ENCODE measurements at regions of chr1 and their contacts with region 1.

Region 1: DNA sequence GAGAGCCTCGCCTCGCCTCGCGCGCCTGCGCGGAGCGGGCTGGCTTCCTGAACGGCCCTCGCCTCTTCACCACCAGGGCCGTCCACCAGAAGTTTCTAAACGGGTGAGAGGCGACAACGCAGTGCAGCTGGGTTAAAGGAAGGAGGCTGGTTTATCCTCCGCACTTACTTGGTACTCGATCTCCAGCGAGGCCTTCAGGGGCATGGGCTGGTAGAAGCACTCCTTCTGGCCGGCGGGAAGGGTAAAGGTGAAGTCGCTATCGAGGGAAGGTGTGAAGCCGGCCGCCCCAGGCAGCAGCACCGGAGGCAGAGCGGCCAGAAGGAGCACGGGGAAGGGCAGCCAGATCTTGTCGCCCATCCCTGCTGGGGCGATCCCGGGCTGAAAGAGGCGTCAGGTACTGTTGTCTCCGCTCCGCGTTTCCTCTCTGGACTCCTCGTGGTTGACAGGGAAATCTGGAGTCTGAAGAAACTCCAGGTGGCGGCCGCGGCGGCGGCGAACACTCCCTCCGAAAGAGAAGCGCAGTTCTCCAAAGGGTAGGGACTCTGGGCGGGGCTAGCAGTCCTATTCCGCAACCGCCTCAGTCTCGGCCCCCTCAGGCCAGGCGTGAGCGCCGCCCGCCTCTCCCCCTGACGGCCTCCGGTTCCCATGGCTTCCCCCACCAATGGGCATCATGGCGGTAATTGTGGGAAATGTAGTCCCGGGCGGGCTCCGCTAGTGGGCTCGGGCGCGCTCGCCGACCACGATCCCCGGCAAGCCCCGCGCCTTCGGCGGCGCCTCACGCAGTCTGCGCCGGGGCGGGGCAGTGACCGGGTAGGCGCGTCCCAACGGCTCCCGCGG is at the start of gene TMED5:
- DNase-seq: peak; percentile 94 to 97 (median 96)
- ATAC-seq: peak; percentile 89
- H3K4me3 ChIP-seq: peak within 1 kb of the TSS; percentile 95
- H3K4me3 Mint-ChIP-seq: peak within 1 kb of the TSS; percentile 91 to 98 (median 94)
- H3K27ac ChIP-seq: peak within 1 kb of the TSS; percentile 91
- H3K27ac Mint-ChIP-seq: peak within 1 kb of the TSS; percentile 86 to 99 (median 97)
- H3K4me1 ChIP-seq: peaks cover 24 to 30% of the 10 kb centered on the region in 2 donors
- H3K4me1 Mint-ChIP-seq: peaks cover 30 to 59% (median 47%) of the 10 kb centered on the region in 7 donors
- H3K27me3 ChIP-seq: no peaks in the 10 kb centered on the region
- H3K27me3 Mint-ChIP-seq: no peaks in the 10 kb centered on the region
- total RNA-seq, gene TMED5: 37.8 to 60.0 (median 47.4) TPM

Region 2: GRCh38 chr1:92831762-92832536 is 348.2 kb before region 1 on chr1 and contains the start of gene RPL5:
- CTCF ChIA-PET with region 1: no interaction called
- POLR2A ChIA-PET with region 1: no interaction called
- intact Hi-C with region 1: loop called (anchors 1 kb)
- DNase-seq: peak; percentile 94 to 99 (median 98)
- ATAC-seq: peak; percentile 95
- H3K4me3 ChIP-seq: peak within 1 kb of the TSS; percentile 94
- H3K4me3 Mint-ChIP-seq: peak within 1 kb of the TSS; percentile 94 to 100 (median 98)
- H3K27ac ChIP-seq: peak within 1 kb of the TSS; percentile 94
- H3K27ac Mint-ChIP-seq: peak within 1 kb of the TSS; percentile 98 to 100 (median 99)
- H3K4me1 ChIP-seq: peaks cover 16 to 30% of the 10 kb centered on the region in 2 donors
- H3K4me1 Mint-ChIP-seq: peaks cover 29 to 54% (median 44%) of the 10 kb centered on the region in 7 donors
- H3K27me3 ChIP-seq: no peaks in the 10 kb centered on the region
- H3K27me3 Mint-ChIP-seq: peaks cover 0 to 5% (median 0%) of the 10 kb centered on the region in 5 donors
- total RNA-seq, gene RPL5: 764 to 1,693 (median 1,596) TPM

Region 3: GRCh38 chr1:93033785-93034184 is 146.3 kb before region 1 on chr1:
- CTCF ChIA-PET with region 1: no interaction called
- POLR2A ChIA-PET with region 1: no interaction called
- intact Hi-C with region 1: loop called in 1 of 2 experiments (anchors 2 kb)
- DNase-seq: no peak
- ATAC-seq: no peak
- H3K4me3 ChIP-seq: no peak overlapping the region
- H3K4me3 Mint-ChIP-seq: no peak overlapping the region
- H3K27ac ChIP-seq: no peak overlapping the region
- H3K27ac Mint-ChIP-seq: no peak overlapping the region
- H3K4me1 ChIP-seq: peaks cover 0 to 10% of the 10 kb centered on the region in 2 donors
- H3K4me1 Mint-ChIP-seq: peaks cover 10 to 34% (median 18%) of the 10 kb centered on the region in 7 donors
- H3K27me3 ChIP-seq: no peaks in the 10 kb centered on the region
- H3K27me3 Mint-ChIP-seq: peaks cover 0 to 3% (median 0%) of the 10 kb centered on the region in 5 donors

Region 4: GRCh38 chr1:93129507-93130099 is 50.5 kb before region 1 on chr1:
- CTCF ChIA-PET with region 1: no interaction called
- POLR2A ChIA-PET with region 1: no interaction called
- intact Hi-C with region 1: no loop called
- DNase-seq: no peak
- ATAC-seq: no peak
- H3K4me3 ChIP-seq: no peak overlapping the region
- H3K4me3 Mint-ChIP-seq: no peak overlapping the region
- H3K27ac ChIP-seq: no peak overlapping the region
- H3K27ac Mint-ChIP-seq: no peak overlapping the region
- H3K4me1 ChIP-seq: no peaks in the 10 kb centered on the region
- H3K4me1 Mint-ChIP-seq: peaks cover 0 to 2% (median 0%) of the 10 kb centered on the region in 7 donors
- H3K27me3 ChIP-seq: no peaks in the 10 kb centered on the region
- H3K27me3 Mint-ChIP-seq: no peaks in the 10 kb centered on the region

Region 5: DNA sequence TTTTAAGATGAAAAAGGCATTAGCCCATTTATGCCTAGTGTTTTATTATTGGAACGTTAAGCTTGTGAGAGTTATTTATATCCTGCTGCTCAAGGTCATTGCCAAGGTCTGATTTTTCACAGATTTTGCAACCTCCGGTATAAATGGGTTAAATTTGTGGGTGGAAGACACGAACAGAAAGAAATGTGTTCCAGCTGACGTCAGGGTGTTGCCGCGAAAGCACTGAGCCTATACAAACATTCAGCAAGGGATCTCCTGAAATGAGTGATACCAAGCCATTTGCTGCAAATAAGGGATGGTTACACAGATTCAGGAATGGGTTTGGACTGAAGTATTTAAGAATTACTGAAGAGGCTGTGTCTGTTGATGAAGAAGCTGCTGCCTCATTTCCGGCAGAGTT is 32.1 kb before region 1 on chr1:
- CTCF ChIA-PET with region 1: no interaction called
- POLR2A ChIA-PET with region 1: no interaction called
- intact Hi-C with region 1: loop called (anchors 5 kb)
- DNase-seq: no peak
- ATAC-seq: no peak
- H3K4me3 ChIP-seq: no peak overlapping the region
- H3K4me3 Mint-ChIP-seq: no peak overlapping the region
- H3K27ac ChIP-seq: no peak overlapping the region
- H3K27ac Mint-ChIP-seq: peak overlapping the region in 2 of 9 donors; percentile 18 to 43
- H3K4me1 ChIP-seq: no peaks in the 10 kb centered on the region
- H3K4me1 Mint-ChIP-seq: peaks cover 0 to 11% (median 0%) of the 10 kb centered on the region in 7 donors
- H3K27me3 ChIP-seq: no peaks in the 10 kb centered on the region
- H3K27me3 Mint-ChIP-seq: no peaks in the 10 kb centered on the region

Region 6: DNA sequence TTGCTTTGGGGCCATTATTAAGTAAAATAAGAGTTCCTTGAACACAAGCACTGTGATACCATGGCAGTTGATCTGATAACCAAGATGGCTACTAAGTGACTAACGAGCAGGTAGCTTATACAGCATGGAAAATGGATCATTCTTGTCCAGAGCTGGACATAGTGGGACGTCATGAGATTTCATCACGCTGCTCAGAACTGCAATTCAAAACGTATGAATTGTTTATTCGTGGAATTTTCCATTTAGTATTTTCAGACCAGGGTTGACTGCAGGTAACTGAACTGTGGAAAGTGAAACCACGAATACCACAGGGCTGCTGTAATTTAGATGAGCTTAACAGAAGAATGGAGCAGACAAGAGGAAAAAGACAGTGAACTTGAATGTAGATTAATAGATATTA is 39.3 kb after region 1 on chr1:
- CTCF ChIA-PET with region 1: no interaction called
- POLR2A ChIA-PET with region 1: no interaction called
- intact Hi-C with region 1: loop called (anchors 1 to 2 kb)
- DNase-seq: peak in 7 of 9 donors; percentile 3 to 28 (median 19)
- ATAC-seq: peak; percentile 34
- H3K4me3 ChIP-seq: peak overlapping the region; percentile 64
- H3K4me3 Mint-ChIP-seq: peak overlapping the region; percentile 35 to 86 (median 79)
- H3K27ac ChIP-seq: peak overlapping the region; percentile 55
- H3K27ac Mint-ChIP-seq: peak overlapping the region; percentile 37 to 90 (median 69)
- H3K4me1 ChIP-seq: peaks cover 4 to 6% of the 10 kb centered on the region in 2 donors
- H3K4me1 Mint-ChIP-seq: peaks cover 6 to 23% (median 19%) of the 10 kb centered on the region in 7 donors
- H3K27me3 ChIP-seq: no peaks in the 10 kb centered on the region
- H3K27me3 Mint-ChIP-seq: no peaks in the 10 kb centered on the region

Region 7: DNA sequence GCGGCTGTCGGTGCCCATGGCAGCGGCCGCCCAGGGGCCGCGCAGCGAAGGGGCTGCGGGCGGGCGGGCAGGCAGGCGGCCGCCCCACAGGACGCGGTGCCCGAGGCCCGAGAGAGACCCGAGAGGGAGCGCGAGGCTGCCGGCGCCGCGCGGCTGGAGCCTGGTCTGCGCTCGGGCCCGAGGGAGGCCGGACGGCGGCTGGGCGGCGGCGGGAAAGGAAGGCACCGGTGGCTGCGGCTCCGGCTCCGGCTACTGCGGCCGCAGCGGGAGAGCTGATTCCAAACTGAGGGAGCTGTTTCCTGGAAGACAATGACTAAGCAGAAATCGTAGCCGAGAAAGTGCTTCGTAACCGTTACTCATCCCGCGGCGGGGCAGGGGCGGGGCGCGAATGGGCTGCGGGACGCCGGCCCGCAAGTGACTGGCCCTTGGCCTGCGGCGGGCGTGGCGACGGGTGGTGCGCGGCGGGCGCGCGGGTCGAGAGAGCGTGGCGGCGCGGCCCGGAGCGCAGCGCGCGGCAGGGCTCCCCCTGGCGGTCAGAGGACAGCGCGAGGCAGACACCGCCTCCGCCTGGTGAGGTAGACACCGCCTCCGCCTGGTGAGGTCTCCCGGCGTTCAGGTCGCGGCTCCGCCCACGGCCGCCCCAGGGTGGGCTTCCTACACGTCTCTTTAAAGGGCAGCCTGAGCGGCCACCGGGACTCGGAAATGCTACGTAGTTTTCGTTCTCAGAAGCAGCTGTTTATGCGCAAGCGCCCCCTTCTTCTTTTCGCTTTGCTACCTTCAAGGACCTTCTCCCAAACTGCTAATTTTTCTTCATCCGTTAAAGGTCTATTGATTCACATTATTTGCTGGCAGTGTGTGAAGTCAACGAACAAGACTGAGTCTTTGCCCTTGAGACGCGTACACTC is 729.3 kb after region 1 on chr1 and contains the start of gene GCLM:
- CTCF ChIA-PET with region 1: no interaction called
- POLR2A ChIA-PET with region 1: no interaction called
- intact Hi-C with region 1: loop called (anchors 1 to 10 kb)
- DNase-seq: peak; percentile 81 to 97 (median 88)
- ATAC-seq: peak; percentile 98
- H3K4me3 ChIP-seq: peak within 1 kb of the TSS; percentile 61
- H3K4me3 Mint-ChIP-seq: peak within 1 kb of the TSS; percentile 86 to 99 (median 90)
- H3K27ac ChIP-seq: peak within 1 kb of the TSS; percentile 73
- H3K27ac Mint-ChIP-seq: peak within 1 kb of the TSS; percentile 60 to 94 (median 90)
- H3K4me1 ChIP-seq: peaks cover 9 to 13% of the 10 kb centered on the region in 2 donors
- H3K4me1 Mint-ChIP-seq: peaks cover 19 to 38% (median 33%) of the 10 kb centered on the region in 7 donors
- H3K27me3 ChIP-seq: no peaks in the 10 kb centered on the region
- H3K27me3 Mint-ChIP-seq: peaks cover 0 to 30% (median 0%) of the 10 kb centered on the region in 5 donors
- total RNA-seq, gene GCLM: 6.4 to 23.8 (median 11.5) TPM